Naive thymus-derived CD4-positive, alpha-beta T cell (primary cell): ENCODE measurements at regions of chr10 and their contacts with region 1.

Region 1: GRCh38 chr10:110746254-110746826 is 102.2 kb downstream of the RBM20 start:
- DNase-seq: peak in 8 of 9 donors; percentile 31 to 56 (median 46)
- ATAC-seq: peak; percentile 55
- H3K4me3 ChIP-seq: no peak overlapping the region
- H3K4me3 Mint-ChIP-seq: no peak overlapping the region
- H3K27ac ChIP-seq: no peak overlapping the region
- H3K27ac Mint-ChIP-seq: peak overlapping the region in 8 of 9 donors; percentile 51 to 94 (median 88)
- H3K4me1 ChIP-seq: peaks cover 5 to 47% of the 10 kb centered on the region in 2 donors
- H3K4me1 Mint-ChIP-seq: peaks cover 23 to 95% (median 87%) of the 10 kb centered on the region in 7 donors
- H3K27me3 ChIP-seq: no peaks in the 10 kb centered on the region
- H3K27me3 Mint-ChIP-seq: no peaks in the 10 kb centered on the region

Region 2: DNA sequence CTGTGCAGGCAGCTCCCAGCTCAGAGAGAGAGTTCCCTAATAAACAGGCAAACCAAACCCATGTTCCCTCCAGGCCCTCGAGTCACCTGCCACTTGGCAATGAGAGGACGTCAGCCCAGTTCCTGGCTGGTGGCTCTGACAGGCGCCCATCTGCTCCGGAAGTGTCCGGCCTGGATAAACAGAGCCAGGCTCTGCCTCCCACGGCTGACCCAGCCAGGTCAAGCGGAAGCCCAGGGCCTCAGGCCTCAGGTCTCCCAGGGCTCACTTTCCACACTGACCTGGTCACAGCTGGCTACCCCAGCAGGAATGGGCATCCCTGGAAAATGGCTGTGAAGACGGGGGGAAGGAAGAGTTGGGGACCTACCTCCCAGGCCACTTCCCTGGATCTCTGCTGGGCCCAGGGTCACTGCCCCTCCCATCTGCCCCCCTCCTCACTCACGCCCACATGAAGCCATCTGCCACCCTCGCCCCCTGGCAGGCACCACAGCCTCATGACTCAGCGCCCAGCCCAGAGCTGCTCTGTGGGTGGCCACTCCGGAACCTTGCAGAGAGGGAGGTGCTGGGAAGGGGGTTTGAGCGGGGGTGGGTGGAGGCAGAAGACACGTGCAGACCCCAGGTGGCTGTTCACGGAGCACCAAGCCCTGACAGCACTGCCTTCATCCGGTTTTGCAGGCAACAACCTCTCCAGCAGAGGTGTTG is 286.1 kb before region 1 on chr10:
- CTCF ChIA-PET with region 1: no interaction called
- POLR2A ChIA-PET with region 1: no interaction called
- intact Hi-C with region 1: no loop called
- DNase-seq: peak in 1 of 9 donors; percentile 47
- ATAC-seq: peak; percentile 73
- H3K4me3 ChIP-seq: no peak overlapping the region
- H3K4me3 Mint-ChIP-seq: no peak overlapping the region
- H3K27ac ChIP-seq: no peak overlapping the region
- H3K27ac Mint-ChIP-seq: peak overlapping the region in 1 of 9 donors; percentile 56
- H3K4me1 ChIP-seq: peaks cover 0 to 38% of the 10 kb centered on the region in 2 donors
- H3K4me1 Mint-ChIP-seq: peaks cover 14 to 33% (median 18%) of the 10 kb centered on the region in 7 donors
- H3K27me3 ChIP-seq: no peaks in the 10 kb centered on the region
- H3K27me3 Mint-ChIP-seq: no peaks in the 10 kb centered on the region

Region 3: GRCh38 chr10:110556969-110557601 is 189.3 kb before region 1 on chr10:
- CTCF ChIA-PET with region 1: no interaction called
- POLR2A ChIA-PET with region 1: no interaction called
- intact Hi-C with region 1: no loop called
- DNase-seq: peak; percentile 27 to 68 (median 56)
- ATAC-seq: peak; percentile 99
- H3K4me3 ChIP-seq: no peak overlapping the region
- H3K4me3 Mint-ChIP-seq: peak overlapping the region in 1 of 10 donors; percentile 2
- H3K27ac ChIP-seq: no peak overlapping the region
- H3K27ac Mint-ChIP-seq: peak overlapping the region in 6 of 9 donors; percentile 1 to 67 (median 42)
- H3K4me1 ChIP-seq: no peaks in the 10 kb centered on the region
- H3K4me1 Mint-ChIP-seq: peaks cover 2 to 10% (median 5%) of the 10 kb centered on the region in 7 donors
- H3K27me3 ChIP-seq: no peaks in the 10 kb centered on the region
- H3K27me3 Mint-ChIP-seq: peaks cover 0 to 68% (median 0%) of the 10 kb centered on the region in 5 donors

Region 4: DNA sequence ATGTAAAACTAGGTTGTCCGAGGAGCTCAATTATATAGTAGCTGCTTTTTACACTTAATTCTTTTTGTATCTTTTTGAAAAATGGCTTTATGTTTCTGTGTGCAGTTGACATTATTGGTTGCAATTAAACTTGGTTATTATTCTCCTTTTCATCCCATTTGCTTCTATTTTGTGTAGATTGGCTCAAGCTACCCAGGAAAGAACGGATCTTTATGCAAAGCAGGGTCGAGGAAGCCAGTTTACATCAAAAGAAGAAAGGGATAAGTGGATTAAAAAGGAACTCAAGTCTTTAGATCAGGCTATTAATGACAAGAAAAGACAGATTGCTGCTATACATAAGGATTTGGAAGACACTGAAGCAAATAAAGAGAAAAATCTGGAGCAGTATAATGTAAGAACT is 162.3 kb before region 1 on chr10:
- CTCF ChIA-PET with region 1: no interaction called
- POLR2A ChIA-PET with region 1: no interaction called
- intact Hi-C with region 1: no loop called
- DNase-seq: no peak
- ATAC-seq: no peak
- H3K4me3 ChIP-seq: no peak overlapping the region
- H3K4me3 Mint-ChIP-seq: no peak overlapping the region
- H3K27ac ChIP-seq: no peak overlapping the region
- H3K27ac Mint-ChIP-seq: peak overlapping the region in 4 of 9 donors; percentile 23 to 68 (median 40)
- H3K4me1 ChIP-seq: no peaks in the 10 kb centered on the region
- H3K4me1 Mint-ChIP-seq: peaks cover 0 to 7% (median 1%) of the 10 kb centered on the region in 7 donors
- H3K27me3 ChIP-seq: no peaks in the 10 kb centered on the region
- H3K27me3 Mint-ChIP-seq: no peaks in the 10 kb centered on the region

Region 5: DNA sequence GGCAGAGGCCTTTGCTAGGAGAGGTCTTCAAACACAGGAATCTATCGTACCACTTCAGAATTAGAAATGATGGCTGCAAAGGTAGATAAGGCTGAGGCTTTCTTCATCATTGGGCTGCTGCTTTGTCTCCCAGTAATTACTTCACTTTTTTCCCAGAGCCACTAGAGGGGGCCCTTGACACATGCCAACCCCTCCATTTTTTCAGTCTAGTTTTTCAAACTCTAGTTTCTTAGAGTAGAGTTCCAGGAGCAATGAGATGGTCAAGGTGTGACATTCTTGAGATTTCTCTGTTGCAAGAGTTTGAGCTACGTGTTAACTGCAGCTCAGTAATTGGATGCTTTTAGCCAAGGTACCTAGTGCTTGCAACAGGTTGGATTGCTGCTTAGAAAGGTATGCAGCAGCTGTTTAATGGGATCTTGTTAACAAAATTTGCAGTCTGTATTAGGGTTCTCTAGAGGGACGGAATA is 136.0 kb before region 1 on chr10:
- CTCF ChIA-PET with region 1: no interaction called
- POLR2A ChIA-PET with region 1: no interaction called
- intact Hi-C with region 1: loop called (anchors 1 kb)
- DNase-seq: peak; percentile 16 to 75 (median 70)
- ATAC-seq: peak; percentile 84
- H3K4me3 ChIP-seq: no peak overlapping the region
- H3K4me3 Mint-ChIP-seq: no peak overlapping the region
- H3K27ac ChIP-seq: no peak overlapping the region
- H3K27ac Mint-ChIP-seq: no peak overlapping the region
- H3K4me1 ChIP-seq: no peaks in the 10 kb centered on the region
- H3K4me1 Mint-ChIP-seq: peaks cover 0 to 18% (median 7%) of the 10 kb centered on the region in 7 donors
- H3K27me3 ChIP-seq: no peaks in the 10 kb centered on the region
- H3K27me3 Mint-ChIP-seq: no peaks in the 10 kb centered on the region

Region 6: GRCh38 chr10:110783509-110784107 is 37.3 kb after region 1 on chr10:
- CTCF ChIA-PET with region 1: no interaction called
- POLR2A ChIA-PET with region 1: no interaction called
- intact Hi-C with region 1: loop called in 1 of 2 experiments (anchors 1 kb)
- DNase-seq: peak; percentile 36 to 92 (median 88)
- ATAC-seq: peak; percentile 94
- H3K4me3 ChIP-seq: no peak overlapping the region
- H3K4me3 Mint-ChIP-seq: peak overlapping the region; percentile 5 to 69 (median 50)
- H3K27ac ChIP-seq: peak overlapping the region; percentile 70
- H3K27ac Mint-ChIP-seq: peak overlapping the region; percentile 68 to 97 (median 93)
- H3K4me1 ChIP-seq: peaks cover 4 to 21% of the 10 kb centered on the region in 2 donors
- H3K4me1 Mint-ChIP-seq: peaks cover 1 to 72% (median 44%) of the 10 kb centered on the region in 7 donors
- H3K27me3 ChIP-seq: no peaks in the 10 kb centered on the region
- H3K27me3 Mint-ChIP-seq: no peaks in the 10 kb centered on the region

Region 7: GRCh38 chr10:110893559-110894179 is 147.3 kb after region 1 on chr10:
- CTCF ChIA-PET with region 1: interaction called, 21 read pairs
- POLR2A ChIA-PET with region 1: interaction called, 4 read pairs
- intact Hi-C with region 1: loop called (anchors 1 kb)
- DNase-seq: peak in 6 of 9 donors; percentile 47 to 75 (median 66)
- ATAC-seq: peak; percentile 91
- H3K4me3 ChIP-seq: no peak overlapping the region
- H3K4me3 Mint-ChIP-seq: peak overlapping the region in 3 of 10 donors; percentile 2 to 34 (median 6)
- H3K27ac ChIP-seq: peak overlapping the region; percentile 56
- H3K27ac Mint-ChIP-seq: peak overlapping the region in 7 of 9 donors; percentile 2 to 68 (median 32)
- H3K4me1 ChIP-seq: peaks cover 0 to 20% of the 10 kb centered on the region in 2 donors
- H3K4me1 Mint-ChIP-seq: peaks cover 10 to 66% (median 51%) of the 10 kb centered on the region in 7 donors
- H3K27me3 ChIP-seq: no peaks in the 10 kb centered on the region
- H3K27me3 Mint-ChIP-seq: no peaks in the 10 kb centered on the region

Region 8: GRCh38 chr10:111076191-111076681 is 329.9 kb after region 1 on chr10:
- CTCF ChIA-PET with region 1: no interaction called
- POLR2A ChIA-PET with region 1: no interaction called
- intact Hi-C with region 1: loop called in 1 of 2 experiments (anchors 5 kb)
- DNase-seq: peak in 6 of 9 donors; percentile 17 to 57 (median 30)
- ATAC-seq: peak; percentile 68
- H3K4me3 ChIP-seq: peak overlapping the region; percentile 44
- H3K4me3 Mint-ChIP-seq: peak overlapping the region; percentile 24 to 85 (median 66)
- H3K27ac ChIP-seq: no peak overlapping the region
- H3K27ac Mint-ChIP-seq: no peak overlapping the region
- H3K4me1 ChIP-seq: peaks cover 0 to 13% of the 10 kb centered on the region in 2 donors
- H3K4me1 Mint-ChIP-seq: peaks cover 5 to 20% (median 10%) of the 10 kb centered on the region in 7 donors
- H3K27me3 ChIP-seq: peaks cover 0 to 21% of the 10 kb centered on the region in 2 donors
- H3K27me3 Mint-ChIP-seq: peaks cover 57 to 76% (median 64%) of the 10 kb centered on the region in 5 donors

Region 9: DNA sequence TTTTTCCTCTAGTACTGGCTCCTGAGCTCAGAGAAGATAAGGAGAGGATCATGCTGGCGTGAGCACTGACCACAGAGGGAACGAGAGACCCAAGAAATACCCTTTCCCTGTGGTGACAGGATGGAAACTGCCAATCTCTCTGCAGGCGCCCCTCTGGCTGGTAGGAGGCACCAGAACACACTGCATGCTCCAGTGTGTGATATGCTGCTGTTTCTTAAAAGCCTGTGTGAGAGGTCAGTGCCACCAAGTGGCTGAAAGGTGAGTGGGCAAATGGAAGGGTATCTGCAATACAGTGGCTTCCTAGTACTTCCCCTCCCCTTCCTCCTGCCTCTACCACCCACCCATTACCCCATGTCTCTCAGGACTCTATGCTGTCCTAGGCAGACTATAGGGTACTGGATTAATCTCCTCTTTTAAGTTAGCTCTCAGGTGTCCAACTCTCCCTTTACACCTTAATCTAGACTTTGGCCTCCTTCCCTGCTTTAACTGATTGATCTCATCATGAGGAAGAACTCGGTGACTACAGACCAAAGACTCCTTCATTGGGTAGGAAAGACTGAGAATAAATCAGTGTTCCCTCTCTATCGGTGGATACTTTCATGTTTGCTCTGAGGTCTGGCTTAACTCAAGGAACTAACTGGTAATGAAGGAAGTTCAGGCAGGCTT is 614.1 kb after region 1 on chr10:
- CTCF ChIA-PET with region 1: no interaction called
- POLR2A ChIA-PET with region 1: no interaction called
- intact Hi-C with region 1: loop called in 1 of 2 experiments (anchors 1 kb)
- DNase-seq: peak in 3 of 9 donors; percentile 2 to 12 (median 5)
- ATAC-seq: peak; percentile 54
- H3K4me3 ChIP-seq: no peak overlapping the region
- H3K4me3 Mint-ChIP-seq: no peak overlapping the region
- H3K27ac ChIP-seq: no peak overlapping the region
- H3K27ac Mint-ChIP-seq: no peak overlapping the region
- H3K4me1 ChIP-seq: no peaks in the 10 kb centered on the region
- H3K4me1 Mint-ChIP-seq: no peaks in the 10 kb centered on the region
- H3K27me3 ChIP-seq: no peaks in the 10 kb centered on the region
- H3K27me3 Mint-ChIP-seq: peaks cover 11 to 64% (median 40%) of the 10 kb centered on the region in 5 donors